ENCODE measurements at regions of chr1 and their contacts with region 1.

Region 1: GRCh38 chr1:111755331-111756123 is at the start of gene DDX20:
- DNase-seq: peak; percentile 93 to 97 (median 97)
- ATAC-seq: peak; percentile 97 to 98
- H3K4me3 ChIP-seq: peak within 1 kb of the TSS; percentile 63
- H3K27ac ChIP-seq: peak within 1 kb of the TSS; percentile 88
- H3K4me1 ChIP-seq: no peaks in the 10 kb centered on the region
- H3K27me3 ChIP-seq: no peaks in the 10 kb centered on the region
- total RNA-seq, gene DDX20: 5.5 to 7.7 (median 6.7) TPM

Region 2: DNA sequence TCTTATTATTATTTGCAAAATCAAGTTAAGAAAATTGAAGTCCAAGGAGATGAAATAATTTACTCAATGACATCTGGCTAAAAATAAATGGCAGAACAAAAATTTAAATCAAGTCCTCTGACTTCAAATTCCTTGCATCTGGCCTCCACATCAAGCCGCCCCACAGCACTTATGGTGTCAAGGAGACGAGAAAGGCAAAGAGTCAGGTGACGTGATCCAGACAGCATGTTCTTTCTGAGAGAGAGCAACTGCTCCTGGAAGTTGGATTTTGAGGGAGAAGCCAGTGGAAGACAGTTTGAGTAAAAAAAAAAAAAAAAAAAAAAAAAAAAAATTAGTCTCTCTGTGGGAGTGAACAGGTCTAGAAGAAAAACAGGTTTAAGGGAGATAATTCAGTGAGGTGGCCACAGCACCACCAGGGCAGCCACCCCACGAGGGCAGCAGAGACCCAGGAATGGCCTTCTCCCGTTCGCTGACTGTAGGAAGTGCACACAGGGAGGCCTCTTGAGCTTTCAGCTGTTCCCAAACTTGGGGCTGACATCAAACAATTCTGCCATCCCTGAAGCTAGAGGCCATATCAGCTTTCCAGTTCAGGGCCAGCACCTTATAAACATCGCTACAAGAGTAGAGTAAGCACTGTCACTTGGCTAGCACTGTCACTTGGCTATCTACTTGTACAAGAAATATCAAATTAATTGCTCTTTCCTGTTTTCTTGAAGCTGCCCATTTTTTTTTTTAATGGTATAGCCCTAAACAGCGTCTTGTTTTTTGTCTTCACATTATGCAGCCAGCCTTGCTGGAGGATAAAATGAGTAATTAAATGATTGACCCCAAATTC is 273.9 kb before region 1 on chr1:
- intact Hi-C with region 1: loop called in 3 of 4 experiments (anchors 10 kb)
- DNase-seq: peak; percentile 75 to 91 (median 89)
- ATAC-seq: peak; percentile 95
- H3K4me3 ChIP-seq: no peak overlapping the region
- H3K27ac ChIP-seq: no peak overlapping the region
- H3K4me1 ChIP-seq: peaks cover 5% of the 10 kb centered on the region
- H3K27me3 ChIP-seq: no peaks in the 10 kb centered on the region

Region 3: GRCh38 chr1:111619635-111620440 is 135.7 kb before region 1 on chr1 and contains the start of gene RAP1A:
- intact Hi-C with region 1: no loop called
- DNase-seq: peak; percentile 95 to 99 (median 98)
- ATAC-seq: peak; percentile 97 to 98
- H3K4me3 ChIP-seq: peak within 1 kb of the TSS; percentile 93
- H3K27ac ChIP-seq: peak within 1 kb of the TSS; percentile 92
- H3K4me1 ChIP-seq: peaks cover 11% of the 10 kb centered on the region
- H3K27me3 ChIP-seq: no peaks in the 10 kb centered on the region
- total RNA-seq, gene RAP1A: 104 to 128 (median 111) TPM

Region 4: GRCh38 chr1:111648806-111649205 is 106.7 kb before region 1 on chr1:
- intact Hi-C with region 1: no loop called
- DNase-seq: peak; percentile 49 to 70 (median 64)
- ATAC-seq: peak in 1 of 2 donors; percentile 30
- H3K4me3 ChIP-seq: no peak overlapping the region
- H3K27ac ChIP-seq: peak overlapping the region; percentile 76
- H3K4me1 ChIP-seq: peaks cover 3% of the 10 kb centered on the region
- H3K27me3 ChIP-seq: no peaks in the 10 kb centered on the region

Region 5: GRCh38 chr1:111719674-111720132 is 35.8 kb before region 1 on chr1:
- intact Hi-C with region 1: loop called in 3 of 4 experiments (anchors 5 to 10 kb)
- DNase-seq: peak; percentile 76 to 82 (median 78)
- ATAC-seq: peak; percentile 45 to 88
- H3K4me3 ChIP-seq: no peak overlapping the region
- H3K27ac ChIP-seq: peak overlapping the region; percentile 86
- H3K4me1 ChIP-seq: peaks cover 30% of the 10 kb centered on the region
- H3K27me3 ChIP-seq: no peaks in the 10 kb centered on the region